ENCODE measurements at regions of chr22 and their contacts with region 1.

Region 1: GRCh38 chr22:37752466-37753087 is 55.2 kb upstream of the GCAT start:
- DNase-seq: peak; percentile 92
- ATAC-seq: peak; percentile 67
- H3K4me3 ChIP-seq: peak overlapping the region; percentile 94 to 98
- H3K27ac ChIP-seq: peak overlapping the region; percentile 98
- H3K4me1 ChIP-seq: peaks cover 65 to 79% of the 10 kb centered on the region in 2 experiments
- H3K27me3 ChIP-seq: no peaks in the 10 kb centered on the region
- CTCF ChIP-seq: 0 out of 6 replicates have a peak, but pooled peaks of 1 of the 3 experiments have one; percentile 25
- POLR2A ChIP-seq: no peak
- RAD21 ChIP-seq: no peak

Region 2: GRCh38 chr22:37764622-37765021 is 12.0 kb after region 1 on chr22:
- CTCF ChIA-PET with region 1: interaction called, 3 read pairs
- POLR2A ChIA-PET with region 1: interaction called, 34 read pairs
- RAD21 ChIA-PET with region 1: no interaction called
- intact Hi-C with region 1: no loop called
- DNase-seq: no peak
- ATAC-seq: no peak
- H3K4me3 ChIP-seq: no peak overlapping the region
- H3K27ac ChIP-seq: no peak overlapping the region
- H3K4me1 ChIP-seq: peaks cover 18 to 63% of the 10 kb centered on the region in 2 experiments
- H3K27me3 ChIP-seq: no peaks in the 10 kb centered on the region
- CTCF ChIP-seq: no peak
- POLR2A ChIP-seq: no peak
- RAD21 ChIP-seq: no peak

Region 3: DNA sequence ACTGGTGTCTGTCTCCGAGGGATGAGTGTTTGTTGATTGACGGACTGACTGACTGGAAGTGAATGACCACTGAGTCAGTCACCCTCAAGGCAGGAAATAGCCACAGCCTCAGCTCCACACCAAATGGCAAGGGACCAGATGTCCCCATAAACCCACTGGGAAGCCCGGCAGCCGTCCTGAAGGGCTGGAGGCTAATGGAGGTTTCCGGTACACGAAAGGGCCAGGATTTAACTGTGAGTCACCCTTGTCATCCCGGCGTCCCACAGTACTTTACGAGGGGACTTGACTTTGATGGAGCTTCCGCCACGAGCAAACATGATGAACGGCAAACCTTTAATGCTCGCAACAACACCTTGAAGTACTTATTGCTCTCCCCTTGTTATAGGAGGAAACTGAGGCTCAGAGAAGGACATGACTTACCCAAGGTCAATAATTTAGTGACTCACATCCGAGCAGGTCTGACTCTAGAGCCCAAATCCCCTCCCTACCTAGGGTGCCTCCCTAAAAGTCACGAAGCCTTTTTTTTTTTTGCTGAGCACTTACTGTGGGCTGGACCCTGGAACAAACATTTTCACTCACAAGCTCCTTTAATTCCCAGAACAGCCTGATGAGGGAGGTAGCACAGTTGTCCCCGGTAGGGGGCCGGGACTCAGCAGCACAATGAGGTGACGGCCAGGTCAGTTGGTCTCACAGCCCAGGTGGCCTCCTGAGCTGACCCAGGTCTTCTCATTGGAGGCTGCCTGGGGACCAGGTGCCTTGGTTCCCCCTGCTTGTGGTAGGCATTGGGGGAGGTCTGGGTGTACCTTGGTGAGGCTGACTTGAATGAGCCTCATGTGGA is 30.0 kb after region 1 on chr22:
- CTCF ChIA-PET with region 1: interaction called, 16 read pairs
- POLR2A ChIA-PET with region 1: interaction called, 63 read pairs
- RAD21 ChIA-PET with region 1: interaction called, 5 to 14 read pairs
- intact Hi-C with region 1: loop called (anchors 2 kb)
- DNase-seq: peak; percentile 97
- ATAC-seq: peak; percentile 73
- H3K4me3 ChIP-seq: peak overlapping the region; percentile 8 to 20; a peak in 3 of 4 replicates
- H3K27ac ChIP-seq: peak overlapping the region; percentile 85
- H3K4me1 ChIP-seq: peaks cover 58 to 78% of the 10 kb centered on the region in 2 experiments
- H3K27me3 ChIP-seq: no peaks in the 10 kb centered on the region
- CTCF ChIP-seq: peak in 2 of 3 experiments; percentile 67 to 71; a peak in 4 of 6 replicates
- POLR2A ChIP-seq: peak; percentile 26
- RAD21 ChIP-seq: no peak

Measured in HCT116 (cell line).